CD4-positive, alpha-beta memory T cell (primary cell): ENCODE measurements at regions of chr9 and their contacts with region 1.

Region 1: DNA sequence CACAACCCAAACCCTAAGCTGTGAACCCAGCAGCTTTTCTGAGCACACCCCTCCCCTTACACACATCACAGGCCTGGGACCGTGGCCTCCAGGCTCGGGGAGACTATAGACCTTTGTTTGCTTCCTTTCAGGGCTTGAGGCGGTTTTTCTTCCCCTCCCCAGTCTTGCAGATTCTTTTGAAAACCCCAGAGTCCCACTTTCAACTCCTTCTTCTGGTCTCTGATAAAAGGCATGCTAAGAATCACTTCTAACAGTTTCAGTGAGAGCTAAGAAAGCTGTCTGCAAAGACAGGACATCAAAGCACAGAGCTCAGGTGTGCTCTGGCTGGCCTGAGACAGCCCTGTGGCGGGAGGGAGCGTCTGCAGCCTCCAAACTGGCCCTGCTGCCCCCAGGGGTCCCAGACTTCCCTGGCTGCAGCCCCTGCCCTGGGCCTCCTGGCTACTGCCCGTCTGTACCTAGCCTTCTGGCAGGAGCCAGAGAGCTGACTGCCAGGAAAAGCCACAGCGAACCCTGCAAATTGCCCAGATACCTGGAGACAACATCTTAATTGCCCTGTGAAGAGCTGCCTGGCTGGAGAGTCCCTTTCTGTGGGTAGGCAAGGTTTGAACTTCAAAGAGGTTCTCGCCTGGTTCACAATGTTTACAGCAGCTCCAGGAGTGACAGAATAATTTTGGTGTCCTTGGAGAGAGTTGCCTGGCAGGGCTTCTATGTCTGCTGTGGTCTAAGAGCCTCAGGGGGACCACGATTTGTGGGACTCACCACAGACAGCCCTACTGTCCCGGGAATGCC is 139.0 kb downstream of the GADD45G start:
- DNase-seq: peak; percentile 68 to 77 (median 73)
- H3K4me3 ChIP-seq: peak overlapping the region in 1 of 2 donors; percentile 34
- H3K4me3 Mint-ChIP-seq: peak overlapping the region; percentile 18 to 88 (median 72)
- H3K27ac ChIP-seq: peak overlapping the region; percentile 42
- H3K27ac Mint-ChIP-seq: peak overlapping the region; percentile 77 to 92 (median 83)
- H3K4me1 ChIP-seq: peaks cover 83% of the 10 kb centered on the region
- H3K4me1 Mint-ChIP-seq: peaks cover 61 to 94% (median 80%) of the 10 kb centered on the region in 4 donors
- H3K27me3 ChIP-seq: no peaks in the 10 kb centered on the region
- H3K27me3 Mint-ChIP-seq: no peaks in the 10 kb centered on the region

Region 2: GRCh38 chr9:89701221-89701798 is 42.5 kb before region 1 on chr9:
- CTCF ChIA-PET with region 1: interaction called, 3 read pairs
- POLR2A ChIA-PET with region 1: interaction called, 15 read pairs
- intact Hi-C with region 1: loop called (anchors 5 kb)
- DNase-seq: peak; percentile 50 to 91 (median 56)
- H3K4me3 ChIP-seq: peak overlapping the region in 1 of 2 donors; percentile 12
- H3K4me3 Mint-ChIP-seq: peak overlapping the region; percentile 55 to 83 (median 68)
- H3K27ac ChIP-seq: peak overlapping the region; percentile 51
- H3K27ac Mint-ChIP-seq: peak overlapping the region; percentile 16 to 91 (median 83)
- H3K4me1 ChIP-seq: peaks cover 20% of the 10 kb centered on the region
- H3K4me1 Mint-ChIP-seq: peaks cover 15 to 35% (median 19%) of the 10 kb centered on the region in 4 donors
- H3K27me3 ChIP-seq: no peaks in the 10 kb centered on the region
- H3K27me3 Mint-ChIP-seq: no peaks in the 10 kb centered on the region

Region 3: DNA sequence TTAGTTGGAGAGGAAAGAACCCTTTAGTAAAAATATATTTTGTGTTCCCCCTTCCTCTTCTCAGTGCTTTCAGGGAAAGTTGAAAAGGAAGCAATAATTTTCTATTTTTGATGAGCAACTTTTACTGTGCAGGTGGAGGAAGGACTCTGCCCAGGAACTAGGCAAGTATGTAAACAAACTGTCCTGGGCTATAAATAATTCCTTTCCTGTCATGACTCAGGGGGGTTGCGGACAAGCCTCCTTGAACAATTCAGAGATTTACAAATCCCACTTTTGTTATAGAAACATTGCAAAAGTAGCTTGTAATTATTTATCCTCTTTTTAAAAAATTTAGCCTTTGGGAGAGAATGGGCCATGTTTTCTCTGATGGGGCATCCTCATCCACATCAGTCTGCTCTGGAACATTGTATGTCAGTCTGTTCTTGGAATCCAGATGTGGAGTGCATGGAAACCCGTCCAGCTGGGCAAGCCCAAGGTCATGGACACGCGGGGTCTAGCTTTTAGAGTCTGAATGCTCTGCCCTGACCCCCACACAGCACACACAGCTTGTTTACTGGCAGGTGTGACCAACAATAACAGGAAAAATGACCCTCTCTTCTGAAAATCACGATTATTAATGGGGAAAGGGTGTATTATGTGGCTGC is 11.3 kb before region 1 on chr9:
- CTCF ChIA-PET with region 1: interaction called, 5 read pairs
- POLR2A ChIA-PET with region 1: interaction called, 13 read pairs
- intact Hi-C with region 1: no loop called
- DNase-seq: no peak
- H3K4me3 ChIP-seq: no peak overlapping the region
- H3K4me3 Mint-ChIP-seq: no peak overlapping the region
- H3K27ac ChIP-seq: no peak overlapping the region
- H3K27ac Mint-ChIP-seq: no peak overlapping the region
- H3K4me1 ChIP-seq: peaks cover 15% of the 10 kb centered on the region
- H3K4me1 Mint-ChIP-seq: peaks cover 0 to 4% (median 2%) of the 10 kb centered on the region in 4 donors
- H3K27me3 ChIP-seq: no peaks in the 10 kb centered on the region
- H3K27me3 Mint-ChIP-seq: no peaks in the 10 kb centered on the region

Region 4: DNA sequence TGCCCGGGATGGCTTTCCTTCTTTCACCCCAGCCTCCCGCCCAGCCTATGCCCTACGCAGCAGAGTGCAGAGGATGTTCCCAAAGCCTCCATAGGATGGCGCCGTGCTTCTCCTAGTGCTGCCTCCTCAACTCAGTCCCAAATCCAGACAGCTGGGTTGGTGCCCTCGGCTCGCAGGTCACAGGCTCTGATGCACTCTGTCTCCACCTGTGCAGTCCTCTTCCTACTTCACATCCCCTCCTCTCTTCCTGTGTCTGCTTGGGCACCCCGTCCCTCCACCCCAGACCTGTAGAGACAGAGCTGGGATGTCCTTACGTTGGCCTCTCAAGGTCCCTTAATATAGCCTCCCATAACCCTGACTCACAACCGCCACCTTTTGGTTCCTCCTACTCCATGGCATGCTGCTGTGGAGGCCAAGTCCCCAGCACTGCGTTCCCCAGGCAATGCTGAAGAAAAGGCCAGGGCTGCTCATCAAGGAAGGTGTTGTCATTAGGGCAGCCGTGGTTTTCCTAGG is 175.5 kb after region 1 on chr9:
- CTCF ChIA-PET with region 1: interaction called, 5 read pairs
- POLR2A ChIA-PET with region 1: no interaction called
- intact Hi-C with region 1: loop called (anchors 5 kb)
- DNase-seq: peak in 4 of 5 donors; percentile 8 to 32 (median 22)
- H3K4me3 ChIP-seq: no peak overlapping the region
- H3K4me3 Mint-ChIP-seq: no peak overlapping the region
- H3K27ac ChIP-seq: no peak overlapping the region
- H3K27ac Mint-ChIP-seq: no peak overlapping the region
- H3K4me1 ChIP-seq: no peaks in the 10 kb centered on the region
- H3K4me1 Mint-ChIP-seq: peaks cover 4 to 13% (median 7%) of the 10 kb centered on the region in 4 donors
- H3K27me3 ChIP-seq: no peaks in the 10 kb centered on the region
- H3K27me3 Mint-ChIP-seq: peaks cover 2 to 8% of the 10 kb centered on the region in 2 donors